GM10248 (cell line): ENCODE measurements at regions of chr4 and their contacts with region 1.

Region 1: GRCh38 chr4:141636082-141636770 is at the start of gene IL15:
- DNase-seq: peak; percentile 87
- CTCF ChIP-seq: no peak

Region 2: GRCh38 chr4:141625023-141625422 is 11.2 kb before region 1 on chr4:
- CTCF ChIA-PET with region 1: interaction called, 14 read pairs
- POLR2A ChIA-PET with region 1: no interaction called
- DNase-seq: no peak
- CTCF ChIP-seq: no peak

Region 3: DNA sequence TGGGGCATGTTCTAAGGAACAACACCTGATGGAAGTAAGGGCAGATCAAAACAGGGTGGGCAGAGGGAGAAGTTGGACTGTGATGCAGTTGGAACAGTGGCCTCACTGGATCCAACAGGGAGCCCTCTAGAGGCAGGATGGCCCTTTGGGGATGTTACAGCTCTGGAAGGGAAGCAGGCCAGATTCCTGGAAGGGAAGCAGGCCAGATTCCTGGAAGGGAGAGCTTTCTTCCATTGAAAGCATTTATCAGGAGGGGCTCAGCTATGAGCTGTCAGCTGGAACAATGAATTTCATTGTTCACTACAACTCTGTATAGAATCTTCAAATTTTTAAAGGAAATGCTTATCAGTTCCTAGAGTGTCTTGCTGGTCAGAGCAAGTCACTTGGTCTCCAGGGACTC is 17.9 kb after region 1 on chr4:
- CTCF ChIA-PET with region 1: interaction called, 15 read pairs
- POLR2A ChIA-PET with region 1: no interaction called
- DNase-seq: no peak
- CTCF ChIP-seq: peak; percentile 37